Endothelial cell of umbilical vein (primary cell): ENCODE measurements at regions of chr4 and their contacts with region 1.

Region 1: GRCh38 chr4:93791570-93792195 is 36.9 kb upstream of the ATOH1 start:
- DNase-seq: peak; percentile 41
- H3K4me3 ChIP-seq: no peak overlapping the region
- H3K27ac ChIP-seq: no peak overlapping the region
- H3K4me1 ChIP-seq: no peaks in the 10 kb centered on the region
- H3K27me3 ChIP-seq: peaks cover 3 to 13% of the 10 kb centered on the region in 2 experiments
- CTCF ChIP-seq: peak; percentile 75 to 77
- POLR2A ChIP-seq: no peak

Region 2: GRCh38 chr4:93897559-93897958 is 105.9 kb after region 1 on chr4:
- CTCF ChIA-PET with region 1: no interaction called
- POLR2A ChIA-PET with region 1: no interaction called
- dilution Hi-C with region 1: no loop called
- intact Hi-C with region 1: loop called (anchors 5 kb)
- DNase-seq: peak; percentile 24
- H3K4me3 ChIP-seq: no peak overlapping the region
- H3K27ac ChIP-seq: no peak overlapping the region
- H3K4me1 ChIP-seq: no peaks in the 10 kb centered on the region
- H3K27me3 ChIP-seq: no peaks in the 10 kb centered on the region
- CTCF ChIP-seq: peak in 1 of 2 donors; percentile 23
- POLR2A ChIP-seq: no peak

Region 3: GRCh38 chr4:94207469-94208224 is 416.0 kb after region 1 on chr4 and contains the start of gene SMARCAD1:
- CTCF ChIA-PET with region 1: no interaction called
- POLR2A ChIA-PET with region 1: no interaction called
- dilution Hi-C with region 1: no loop called
- intact Hi-C with region 1: loop called (anchors 5 kb)
- DNase-seq: peak; percentile 96
- H3K4me3 ChIP-seq: peak within 1 kb of the TSS; percentile 8 to 78 (median 72)
- H3K27ac ChIP-seq: peak within 1 kb of the TSS; percentile 84
- H3K4me1 ChIP-seq: peaks cover 19% of the 10 kb centered on the region
- H3K27me3 ChIP-seq: no peaks in the 10 kb centered on the region
- CTCF ChIP-seq: no peak
- POLR2A ChIP-seq: peak; percentile 85
- total RNA-seq, gene SMARCAD1: 34.8 and 35.5 TPM in 2 replicates

Region 4: GRCh38 chr4:94304365-94304971 is 512.8 kb after region 1 on chr4:
- CTCF ChIA-PET with region 1: no interaction called
- POLR2A ChIA-PET with region 1: no interaction called
- dilution Hi-C with region 1: no loop called
- intact Hi-C with region 1: loop called (anchors 5 kb)
- DNase-seq: peak; percentile 66
- H3K4me3 ChIP-seq: no peak overlapping the region
- H3K27ac ChIP-seq: no peak overlapping the region
- H3K4me1 ChIP-seq: peaks cover 20% of the 10 kb centered on the region
- H3K27me3 ChIP-seq: no peaks in the 10 kb centered on the region
- CTCF ChIP-seq: peak; percentile 44 to 45
- POLR2A ChIP-seq: no peak

Region 5: DNA sequence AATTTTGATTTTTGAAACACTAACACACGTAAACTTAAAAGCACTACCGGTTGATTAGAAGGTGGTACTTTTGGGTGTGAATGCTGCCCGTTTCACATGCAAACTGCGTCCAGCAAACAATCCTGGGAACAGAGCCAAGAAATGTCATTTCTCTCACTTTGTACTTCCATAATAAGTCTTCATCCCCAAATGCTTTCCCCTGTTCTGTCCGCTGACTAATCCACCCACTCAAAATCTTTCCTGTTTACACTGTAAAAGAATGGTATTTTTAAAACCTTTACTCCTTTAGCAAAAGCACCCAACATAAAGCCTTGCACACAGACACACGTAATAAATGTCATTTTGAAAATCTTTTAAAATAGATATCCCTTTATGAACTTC is 621.0 kb after region 1 on chr4:
- CTCF ChIA-PET with region 1: no interaction called
- POLR2A ChIA-PET with region 1: no interaction called
- dilution Hi-C with region 1: no loop called
- intact Hi-C with region 1: no loop called
- DNase-seq: peak; percentile 95
- H3K4me3 ChIP-seq: peak overlapping the region in 1 of 3 experiments; percentile 65
- H3K27ac ChIP-seq: peak overlapping the region; percentile 65
- H3K4me1 ChIP-seq: peaks cover 33% of the 10 kb centered on the region
- H3K27me3 ChIP-seq: no peaks in the 10 kb centered on the region
- CTCF ChIP-seq: no peak
- POLR2A ChIP-seq: no peak

Region 6: GRCh38 chr4:94595879-94596483 is 804.3 kb after region 1 on chr4:
- CTCF ChIA-PET with region 1: no interaction called
- POLR2A ChIA-PET with region 1: no interaction called
- dilution Hi-C with region 1: no loop called
- intact Hi-C with region 1: loop called (anchors 10 kb)
- DNase-seq: peak; percentile 76
- H3K4me3 ChIP-seq: no peak overlapping the region
- H3K27ac ChIP-seq: no peak overlapping the region
- H3K4me1 ChIP-seq: peaks cover 11% of the 10 kb centered on the region
- H3K27me3 ChIP-seq: no peaks in the 10 kb centered on the region
- CTCF ChIP-seq: peak; percentile 26 to 28
- POLR2A ChIP-seq: no peak